ENCODE measurements at regions of chr14 and their contacts with region 1.

Region 1: DNA sequence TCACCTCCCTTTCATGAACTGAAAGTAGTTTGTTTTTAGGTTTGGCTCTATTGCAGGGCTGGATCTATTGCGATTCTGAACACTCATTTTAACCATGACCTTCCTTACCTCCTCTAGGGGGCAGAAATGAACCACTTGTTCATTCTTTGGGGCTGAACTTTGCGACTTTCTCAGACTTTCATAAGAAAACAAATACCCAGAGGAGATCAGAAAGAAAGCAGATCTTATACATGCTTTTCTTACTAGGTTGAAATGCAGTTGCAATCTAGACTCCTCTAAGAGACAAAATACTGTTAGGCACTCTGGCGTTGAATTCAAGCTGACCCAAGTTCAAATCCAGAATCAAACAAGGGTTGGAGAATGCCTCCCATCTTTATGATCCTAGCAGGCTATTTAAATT is 32.6 kb upstream of the PLEKHG3 start:
- DNase-seq: peak; percentile 63

Region 2: DNA sequence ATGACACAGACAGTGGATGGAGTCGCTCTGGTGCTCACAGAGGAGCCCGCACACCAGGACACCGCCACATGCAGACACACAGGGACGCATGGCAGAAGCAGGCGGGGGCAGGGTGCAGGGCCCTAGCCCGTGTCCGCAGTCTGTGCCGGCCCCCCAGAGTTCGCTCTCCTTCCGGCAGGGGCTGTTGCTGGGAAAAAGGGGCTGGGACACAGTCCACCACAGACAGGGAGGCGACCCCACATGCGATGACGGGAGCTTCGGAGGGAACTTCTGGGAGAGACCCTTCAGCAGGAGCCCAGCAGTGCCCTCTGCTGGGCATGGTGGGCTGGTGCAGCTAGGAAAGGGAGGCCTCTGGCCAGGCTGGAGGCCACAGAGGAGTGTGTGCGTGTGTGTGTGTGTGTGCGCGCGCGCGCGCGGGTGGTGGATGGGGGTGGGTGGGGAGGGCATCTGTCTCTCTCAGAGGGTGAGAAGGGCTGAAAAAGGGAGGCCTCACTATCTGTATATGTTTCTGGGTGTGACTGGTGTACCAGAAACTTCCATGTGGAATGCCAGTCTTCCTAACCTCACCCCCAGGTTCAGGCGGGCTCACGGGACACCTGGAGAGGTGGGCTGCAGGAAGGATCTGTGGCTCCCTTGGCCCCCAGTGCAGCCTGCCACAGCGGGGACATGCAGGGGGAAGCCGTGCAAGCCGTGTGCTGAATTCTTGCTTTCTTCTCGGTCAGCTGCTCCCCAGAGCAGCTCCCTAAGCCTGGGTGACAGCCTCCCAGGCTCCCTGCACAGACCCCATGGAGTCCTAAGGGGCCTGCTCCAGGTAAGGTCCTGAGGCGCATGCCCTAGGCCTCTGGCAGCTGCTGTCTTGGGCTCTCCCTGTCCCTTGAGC is 93.3 kb after region 1 on chr14:
- in situ Hi-C with region 1: loop called (anchors 10 kb)
- DNase-seq: peak; percentile 88

Region 3: DNA sequence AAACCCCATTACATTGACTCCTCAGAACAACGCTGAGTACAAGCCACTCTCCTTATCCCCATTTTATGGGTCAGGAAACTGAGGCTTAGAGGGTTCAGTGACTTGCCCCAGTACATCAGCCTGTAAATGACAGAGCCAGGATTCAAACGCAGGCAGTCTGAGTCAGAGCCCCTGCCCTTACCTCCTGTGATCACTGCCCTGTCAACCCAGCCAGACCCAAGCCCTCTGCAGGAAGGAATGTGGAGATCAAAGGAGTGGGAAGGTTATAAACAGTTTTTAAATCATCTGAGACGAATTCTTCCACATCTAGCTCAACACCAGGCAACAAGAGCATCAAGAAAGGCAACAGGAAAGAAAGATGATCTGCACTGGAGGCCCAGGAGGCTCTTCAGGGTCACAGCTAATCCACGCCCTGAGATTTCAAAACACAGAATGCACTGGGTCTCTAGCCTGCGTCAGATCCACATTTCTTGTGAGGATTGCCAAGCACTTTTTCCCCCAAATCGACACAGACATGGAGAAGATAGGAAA is 169.6 kb after region 1 on chr14:
- in situ Hi-C with region 1: no loop called
- DNase-seq: no peak